Natural killer cell (primary cell): ENCODE measurements at regions of chr1 and their contacts with region 1.

Region 1: DNA sequence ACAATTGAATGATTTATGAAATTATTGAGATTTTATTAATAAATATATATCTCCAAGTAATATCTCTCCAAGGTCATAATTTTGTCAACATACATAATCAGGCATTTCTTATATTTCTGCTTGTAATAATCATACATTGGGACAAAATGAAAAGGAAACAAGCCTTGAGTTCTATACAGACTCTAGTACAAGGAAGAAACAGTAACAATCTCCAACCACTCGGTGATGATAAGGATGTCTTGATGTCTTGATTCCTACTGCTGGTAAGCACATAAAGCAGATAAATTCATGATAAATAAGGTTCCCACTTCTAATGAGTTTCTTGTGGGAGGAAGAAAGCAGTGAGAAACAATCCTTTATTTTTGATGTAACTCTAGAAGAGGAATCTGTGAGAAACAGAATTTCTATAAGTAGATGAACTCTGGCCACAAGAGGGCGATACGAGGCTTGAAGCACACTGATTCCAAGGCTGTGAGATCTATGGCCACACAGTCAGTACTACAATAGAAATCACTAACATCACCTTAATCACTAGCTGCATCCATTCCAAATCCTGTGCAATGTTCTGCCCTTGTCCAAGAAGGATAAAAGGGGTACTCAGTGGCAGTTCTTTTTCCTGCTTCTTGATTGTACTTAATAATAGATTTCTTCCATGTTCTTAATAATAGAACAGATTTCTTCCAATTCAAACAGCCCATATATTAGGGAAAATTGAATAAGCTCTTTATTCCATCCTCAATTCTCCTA is 41.4 kb upstream of the LRRC8B start:
- DNase-seq: peak; percentile 48 to 88
- ATAC-seq: peak; percentile 84 to 95 (median 93)
- H3K4me3 ChIP-seq: no peak overlapping the region
- H3K4me3 Mint-ChIP-seq: no peak overlapping the region
- H3K27ac ChIP-seq: no peak overlapping the region
- H3K27ac Mint-ChIP-seq: no peak overlapping the region
- H3K4me1 ChIP-seq: no peaks in the 10 kb centered on the region
- H3K4me1 Mint-ChIP-seq: peaks cover 0 to 3% of the 10 kb centered on the region in 2 donors
- H3K27me3 ChIP-seq: peaks cover 3% of the 10 kb centered on the region
- H3K27me3 Mint-ChIP-seq: peaks cover 4 to 8% of the 10 kb centered on the region in 2 donors
- CTCF ChIP-seq: peak; percentile 88

Region 2: GRCh38 chr1:89598450-89599331 is 115.5 kb after region 1 on chr1:
- intact Hi-C with region 1: loop called (anchors 1 kb)
- DNase-seq: peak in 1 of 2 donors; percentile 71
- ATAC-seq: peak; percentile 62 to 82 (median 67)
- H3K4me3 ChIP-seq: no peak overlapping the region
- H3K4me3 Mint-ChIP-seq: no peak overlapping the region
- H3K27ac ChIP-seq: no peak overlapping the region
- H3K27ac Mint-ChIP-seq: peak overlapping the region in 1 of 2 donors; percentile 2
- H3K4me1 ChIP-seq: no peaks in the 10 kb centered on the region
- H3K4me1 Mint-ChIP-seq: peaks cover 7 to 8% of the 10 kb centered on the region in 2 donors
- H3K27me3 ChIP-seq: no peaks in the 10 kb centered on the region
- H3K27me3 Mint-ChIP-seq: no peaks in the 10 kb centered on the region
- CTCF ChIP-seq: peak; percentile 80